ENCODE measurements at regions of chr11 and their contacts with region 1.

Region 1: GRCh38 chr11:7696424-7696823 is 9.9 kb downstream of the OVCH2 start:
- DNase-seq: no peak
- ATAC-seq: no peak
- H3K4me3 ChIP-seq: no peak overlapping the region
- H3K4me3 Mint-ChIP-seq: no peak overlapping the region
- H3K27ac ChIP-seq: no peak overlapping the region
- H3K27ac Mint-ChIP-seq: no peak overlapping the region
- H3K4me1 ChIP-seq: no peaks in the 10 kb centered on the region
- H3K4me1 Mint-ChIP-seq: no peaks in the 10 kb centered on the region
- H3K27me3 ChIP-seq: peaks cover 0 to 3% of the 10 kb centered on the region in 2 experiments
- H3K27me3 Mint-ChIP-seq: peaks cover 22% of the 10 kb centered on the region
- CTCF ChIP-seq: no peak

Region 2: DNA sequence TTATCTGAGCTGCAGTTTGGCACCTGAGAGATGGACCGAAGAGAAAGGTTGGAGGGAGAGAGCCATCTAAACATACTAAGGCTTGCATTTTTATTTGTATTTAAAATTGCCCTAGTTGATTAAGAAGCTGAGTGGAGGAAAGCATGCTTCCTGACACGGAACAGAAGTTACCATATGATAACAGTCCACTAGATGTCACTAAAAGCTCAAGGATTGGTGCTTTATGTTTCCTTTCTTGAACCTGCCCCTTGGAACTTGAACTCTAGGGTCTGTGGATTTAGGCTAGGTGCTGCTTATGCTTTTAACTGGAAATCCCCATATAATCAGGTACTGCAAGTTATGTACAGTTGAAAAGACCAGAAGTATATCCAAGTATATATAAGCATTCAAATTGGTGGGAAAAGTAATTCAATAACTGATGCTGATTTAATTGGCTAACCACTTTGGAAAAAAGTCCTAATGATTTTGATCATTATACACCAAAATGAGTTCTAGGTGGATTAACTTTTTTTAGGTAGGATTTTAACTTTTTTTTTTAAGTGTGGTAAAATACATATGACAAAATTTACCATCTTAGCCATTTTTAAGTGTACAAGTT is 598.1 kb before region 1 on chr11:
- CTCF ChIA-PET with region 1: interaction called, 14 read pairs
- POLR2A ChIA-PET with region 1: no interaction called
- intact Hi-C with region 1: loop called (anchors 1 to 2 kb)
- DNase-seq: peak in 2 of 9 experiments; percentile 53 to 69
- ATAC-seq: no peak
- H3K4me3 ChIP-seq: no peak overlapping the region
- H3K4me3 Mint-ChIP-seq: no peak overlapping the region
- H3K27ac ChIP-seq: no peak overlapping the region
- H3K27ac Mint-ChIP-seq: no peak overlapping the region
- H3K4me1 ChIP-seq: no peaks in the 10 kb centered on the region
- H3K4me1 Mint-ChIP-seq: no peaks in the 10 kb centered on the region
- H3K27me3 ChIP-seq: no peaks in the 10 kb centered on the region
- H3K27me3 Mint-ChIP-seq: peaks cover 11% of the 10 kb centered on the region
- CTCF ChIP-seq: peak; percentile 63

Region 3: DNA sequence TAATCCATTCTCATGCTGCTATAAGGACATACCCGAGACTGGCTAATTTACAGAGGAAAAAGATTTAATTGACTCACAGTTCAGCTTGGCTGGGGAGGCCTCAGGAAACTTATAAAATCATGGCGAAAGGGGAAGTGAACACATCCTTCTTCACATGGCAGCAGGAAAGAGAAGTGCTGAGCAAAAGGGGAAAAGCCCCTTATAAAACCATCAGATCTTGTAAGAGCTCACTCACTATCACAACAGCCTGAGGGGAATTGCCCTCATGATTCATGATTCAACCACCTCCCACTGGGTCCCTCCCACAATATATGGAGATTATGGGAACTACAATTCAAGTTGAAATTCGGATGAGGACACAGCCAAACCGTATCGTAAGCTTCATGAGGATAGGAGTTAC is 19.4 kb before region 1 on chr11:
- CTCF ChIA-PET with region 1: interaction called, 10 read pairs
- POLR2A ChIA-PET with region 1: no interaction called
- intact Hi-C with region 1: no loop called
- DNase-seq: no peak
- ATAC-seq: no peak
- H3K4me3 ChIP-seq: no peak overlapping the region
- H3K4me3 Mint-ChIP-seq: no peak overlapping the region
- H3K27ac ChIP-seq: no peak overlapping the region
- H3K27ac Mint-ChIP-seq: no peak overlapping the region
- H3K4me1 ChIP-seq: peaks cover 3% of the 10 kb centered on the region
- H3K4me1 Mint-ChIP-seq: peaks cover 10% of the 10 kb centered on the region
- H3K27me3 ChIP-seq: peaks cover 8 to 19% of the 10 kb centered on the region in 2 experiments
- H3K27me3 Mint-ChIP-seq: peaks cover 59% of the 10 kb centered on the region
- CTCF ChIP-seq: no peak

Region 4: DNA sequence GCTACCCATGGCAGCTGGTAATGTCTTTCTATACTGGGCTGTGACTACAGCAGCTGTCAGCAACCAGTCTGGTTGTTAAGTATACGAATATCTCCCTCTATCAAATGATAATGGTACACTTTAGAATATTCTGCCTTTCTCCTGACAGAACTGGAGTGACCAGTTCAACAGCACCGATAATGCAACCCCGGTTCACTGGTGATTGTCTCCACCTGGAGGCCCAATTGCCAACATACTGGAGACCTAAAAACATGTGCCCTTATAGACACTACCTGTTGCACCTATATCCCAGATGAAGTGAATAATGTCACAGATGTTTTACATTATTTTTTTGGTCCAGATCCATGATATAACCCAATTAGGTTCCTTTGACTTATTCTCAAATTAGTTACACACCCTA is 79.3 kb after region 1 on chr11:
- CTCF ChIA-PET with region 1: no interaction called
- POLR2A ChIA-PET with region 1: no interaction called
- intact Hi-C with region 1: no loop called
- DNase-seq: no peak
- ATAC-seq: no peak
- H3K4me3 ChIP-seq: no peak overlapping the region
- H3K4me3 Mint-ChIP-seq: no peak overlapping the region
- H3K27ac ChIP-seq: no peak overlapping the region
- H3K27ac Mint-ChIP-seq: no peak overlapping the region
- H3K4me1 ChIP-seq: no peaks in the 10 kb centered on the region
- H3K4me1 Mint-ChIP-seq: no peaks in the 10 kb centered on the region
- H3K27me3 ChIP-seq: no peaks in the 10 kb centered on the region
- H3K27me3 Mint-ChIP-seq: peaks cover 3% of the 10 kb centered on the region
- CTCF ChIP-seq: no peak

Measured in CD8-positive, alpha-beta T cell (primary cell).